Sigmoid colon (tissue), 7 donors: ENCODE measurements at regions of chr14 and their contacts with region 1.

Region 1: DNA sequence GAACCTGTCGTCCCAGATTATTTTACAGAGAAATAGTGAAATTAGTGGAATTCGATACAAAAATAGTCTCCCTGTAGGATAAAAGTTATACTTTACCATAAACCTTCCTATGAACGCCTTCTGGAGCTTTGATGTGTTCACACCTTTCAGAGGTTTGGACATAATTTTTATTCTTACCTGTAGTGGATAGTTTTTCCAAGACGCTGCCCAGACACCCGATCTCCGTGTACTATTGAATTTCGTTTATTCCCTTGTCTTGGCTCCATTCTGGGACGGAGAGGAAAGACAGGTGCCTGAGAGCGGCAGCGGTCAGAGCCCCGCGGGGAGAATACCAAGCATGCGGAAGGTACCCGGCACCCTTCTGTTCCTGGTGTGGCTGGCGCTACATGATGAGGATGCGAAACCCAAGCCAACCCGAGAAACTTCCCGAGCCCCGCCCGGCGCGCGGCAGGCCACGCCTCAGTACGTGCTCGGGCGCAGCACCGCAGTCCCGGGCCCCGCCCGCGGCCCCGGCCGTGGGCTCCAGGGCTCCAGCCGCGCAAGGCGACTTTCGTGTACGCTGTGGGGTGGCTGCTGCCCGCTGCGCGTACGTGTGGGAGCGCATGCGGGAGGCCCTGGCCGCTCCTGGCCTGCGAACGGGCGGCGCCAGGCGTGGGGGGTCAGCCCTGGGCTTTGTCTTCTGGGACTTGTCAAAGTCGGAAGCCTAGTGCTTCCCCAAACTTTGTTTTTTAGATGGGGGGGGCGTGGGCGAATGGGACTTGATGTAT is 11.3 kb upstream of the SNAPC1 start:
- DNase-seq: peak; percentile 92
- H3K4me3 ChIP-seq: peak overlapping the region; percentile 42 to 64 (median 62)
- H3K27ac ChIP-seq: peak overlapping the region; percentile 84 to 93 (median 89)
- H3K4me1 ChIP-seq: peaks cover 0 to 22% (median 8%) of the 10 kb centered on the region in 4 donors
- H3K27me3 ChIP-seq: no peaks in the 10 kb centered on the region
- CTCF ChIP-seq: no peak
- EP300 ChIP-seq: no peak
- POLR2A ChIP-seq: peak; percentile 16 to 39

Region 2: GRCh38 chr14:61475316-61475715 is 275.6 kb before region 1 on chr14:
- intact Hi-C with region 1: loop called (anchors 5 kb)
- DNase-seq: no peak
- H3K4me3 ChIP-seq: no peak overlapping the region
- H3K27ac ChIP-seq: peak overlapping the region in 2 of 4 donors; percentile 73 to 76
- H3K4me1 ChIP-seq: peaks cover 0 to 33% (median 30%) of the 10 kb centered on the region in 4 donors
- H3K27me3 ChIP-seq: no peaks in the 10 kb centered on the region
- CTCF ChIP-seq: peak in 3 of 4 experiments; percentile 57 to 66 (median 65)
- EP300 ChIP-seq: no peak
- POLR2A ChIP-seq: no peak

Region 3: GRCh38 chr14:61965030-61965745 is 214.3 kb after region 1 on chr14:
- intact Hi-C with region 1: no loop called
- DNase-seq: no peak
- H3K4me3 ChIP-seq: no peak overlapping the region
- H3K27ac ChIP-seq: no peak overlapping the region
- H3K4me1 ChIP-seq: no peaks in the 10 kb centered on the region
- H3K27me3 ChIP-seq: no peaks in the 10 kb centered on the region
- CTCF ChIP-seq: no peak
- EP300 ChIP-seq: no peak
- POLR2A ChIP-seq: no peak